ENCODE measurements at regions of chrX and their contacts with region 1.

Region 1: DNA sequence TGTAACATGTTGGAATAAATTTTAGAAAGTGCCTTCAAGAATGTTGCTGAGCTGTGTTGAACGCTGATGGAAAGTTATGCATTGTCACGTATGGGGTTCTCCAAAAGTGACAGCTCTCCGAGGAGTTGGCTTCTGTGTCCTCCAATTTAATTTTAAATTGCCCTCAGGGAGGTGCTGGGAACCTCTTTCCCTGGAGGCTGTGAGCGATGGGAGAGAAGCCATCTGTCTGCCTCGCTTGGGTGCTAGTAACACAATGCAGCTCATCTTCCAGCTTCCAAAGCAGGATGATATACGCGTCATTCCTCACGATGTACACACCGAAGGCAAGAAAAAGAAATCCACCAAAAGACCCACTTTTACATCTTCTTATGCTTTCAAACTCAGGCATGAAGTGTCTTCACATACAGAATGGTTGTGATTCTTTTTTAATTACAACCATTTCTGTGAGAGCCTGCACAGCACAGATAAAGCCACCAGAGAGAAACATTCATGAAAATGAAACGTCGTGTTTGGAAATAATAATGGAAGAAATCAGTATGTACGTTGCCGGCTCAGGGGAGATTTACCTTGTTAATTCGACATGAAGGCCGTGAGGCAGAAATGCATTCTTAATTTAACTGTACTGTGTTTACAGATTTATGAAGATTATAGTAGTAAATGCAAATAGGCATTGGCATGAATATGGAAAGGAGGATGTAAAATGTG is 218.9 kb downstream of the ASMT start:
- DNase-seq: no peak

Region 2: DNA sequence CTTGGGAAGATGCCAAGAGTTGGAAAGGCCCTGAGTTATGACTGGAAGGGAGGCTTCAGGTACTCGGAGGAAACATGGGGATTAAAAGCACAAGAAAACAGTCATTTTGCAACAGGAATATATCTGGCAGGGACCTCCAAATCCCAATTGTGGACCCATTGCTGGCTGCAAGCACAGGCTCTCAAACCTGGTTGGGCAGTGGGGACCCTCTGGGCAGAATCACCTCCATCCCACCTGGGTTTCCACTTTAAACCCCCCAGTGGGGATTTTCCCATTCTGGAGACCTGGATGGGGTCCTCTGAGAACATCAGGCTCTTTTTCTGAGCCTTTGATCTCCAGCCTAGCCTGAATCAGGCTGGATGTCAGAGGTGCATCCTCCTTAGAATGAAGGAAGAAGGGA is 41.2 kb before region 1 on chrX:
- intact Hi-C with region 1: loop called in 1 of 2 experiments (anchors 2 kb)
- DNase-seq: no peak

Region 3: DNA sequence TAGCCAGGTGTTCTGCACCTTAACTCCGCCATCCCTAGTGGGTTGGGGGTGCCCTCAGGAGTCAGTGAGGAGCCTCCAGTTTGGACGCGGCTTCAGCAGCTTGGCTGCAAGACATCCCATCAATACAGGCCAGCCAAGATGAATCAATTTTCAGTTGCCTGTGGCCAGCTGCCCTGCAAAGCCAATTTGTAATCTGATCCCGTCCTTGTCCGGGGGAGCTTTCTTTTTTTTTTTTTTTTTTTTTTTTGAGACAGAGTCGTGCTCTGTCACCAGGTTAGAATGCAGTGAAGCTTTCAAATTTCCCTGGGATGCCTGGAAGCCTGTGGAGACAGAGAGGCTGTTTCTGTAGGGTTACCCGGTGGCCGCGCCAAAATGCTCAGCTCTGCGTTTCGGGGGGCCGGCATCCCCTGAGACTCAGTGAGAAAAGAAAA is 26.5 kb before region 1 on chrX:
- intact Hi-C with region 1: no loop called
- DNase-seq: no peak